ENCODE measurements at regions of chr1 and their contacts with region 1.

Region 1: DNA sequence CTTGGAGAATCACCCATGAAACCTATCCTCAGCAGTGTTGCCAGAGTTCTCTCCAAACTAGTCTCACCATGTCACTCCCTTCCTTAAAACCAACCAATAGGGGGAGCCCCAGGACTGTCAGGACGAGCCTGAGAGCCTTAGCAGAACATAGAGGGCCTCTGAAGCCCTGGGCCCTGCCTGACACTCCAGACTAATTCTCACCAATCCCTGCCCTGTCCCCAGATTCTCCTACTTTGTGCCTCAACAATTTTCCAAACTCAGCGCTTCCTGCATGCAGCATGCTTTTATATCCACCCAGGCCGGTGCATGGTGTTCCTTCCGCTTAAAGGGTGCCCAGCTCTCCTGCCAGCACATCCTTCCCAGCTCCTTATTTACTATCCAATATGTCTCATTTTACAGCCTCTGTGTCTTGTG is 42.7 kb downstream of the HSD3B1 start:
- DNase-seq: peak; percentile 40 to 76
- H3K4me3 ChIP-seq: no peak overlapping the region
- H3K4me1 ChIP-seq: no peaks in the 10 kb centered on the region
- H3K27me3 ChIP-seq: no peaks in the 10 kb centered on the region

Region 2: GRCh38 chr1:119384591-119384990 is 165.1 kb before region 1 on chr1:
- in situ Hi-C with region 1: no loop called
- DNase-seq: no peak
- H3K4me3 ChIP-seq: no peak overlapping the region
- H3K4me1 ChIP-seq: no peaks in the 10 kb centered on the region
- H3K27me3 ChIP-seq: peaks cover 9% of the 10 kb centered on the region; the same call in 1 of the 2 replicates

Region 3: GRCh38 chr1:119613769-119614720 is 64.3 kb after region 1 on chr1:
- in situ Hi-C with region 1: no loop called
- DNase-seq: peak; percentile 84 to 93
- H3K4me3 ChIP-seq: no peak overlapping the region
- H3K4me1 ChIP-seq: no peaks in the 10 kb centered on the region
- H3K27me3 ChIP-seq: no peaks in the 10 kb centered on the region

Region 4: DNA sequence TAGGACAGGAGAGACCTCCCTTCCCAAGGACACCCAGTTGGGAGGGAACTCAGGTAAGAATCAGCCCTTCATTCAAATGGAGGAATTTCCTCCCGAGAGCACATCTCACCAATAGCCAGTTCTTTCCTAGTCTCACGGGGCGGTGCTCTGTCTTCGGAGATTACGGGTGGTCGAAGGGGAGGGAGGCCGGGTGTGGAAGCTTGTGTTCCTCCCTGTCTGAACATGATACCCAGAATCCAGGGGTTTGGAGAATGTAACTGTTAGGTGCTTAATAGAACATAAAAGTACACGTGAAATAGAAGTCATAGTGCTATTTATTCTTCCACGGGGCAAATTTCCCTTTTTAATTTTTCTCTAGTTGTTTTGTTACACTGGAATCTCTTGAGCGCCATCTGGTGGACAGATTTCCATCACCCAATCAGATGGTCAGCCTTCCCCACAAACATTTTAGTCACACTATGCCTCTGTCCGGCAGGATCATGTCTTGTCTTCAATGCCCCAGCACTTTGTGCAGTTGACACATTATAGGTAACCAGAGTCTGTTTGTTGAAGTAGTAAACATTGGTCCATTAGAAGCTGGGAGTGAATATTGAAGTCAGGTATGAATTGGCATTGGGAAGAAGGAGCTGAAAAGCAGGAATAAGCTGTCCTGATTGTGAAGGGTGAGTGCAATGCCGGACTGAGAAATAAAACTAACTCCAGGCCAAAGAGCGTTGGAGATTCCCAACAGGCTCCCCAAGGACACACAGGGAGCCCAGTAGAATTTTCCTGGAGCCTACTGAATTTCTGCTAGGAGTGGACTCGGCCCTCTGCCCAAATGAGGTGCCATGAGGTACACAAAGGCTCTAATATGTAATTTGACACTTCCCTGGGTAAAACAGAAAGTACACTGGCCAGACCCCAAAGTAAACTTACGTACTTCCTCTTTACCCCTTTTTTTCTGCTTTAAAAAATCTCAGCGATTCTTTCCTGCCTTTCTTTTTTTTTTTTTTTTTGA is 125.9 kb after region 1 on chr1:
- in situ Hi-C with region 1: loop called (anchors 25 kb)
- DNase-seq: peak; percentile 76 to 91
- H3K4me3 ChIP-seq: peak overlapping the region; percentile 23
- H3K4me1 ChIP-seq: peaks cover 41% of the 10 kb centered on the region
- H3K27me3 ChIP-seq: no peaks in the 10 kb centered on the region

Region 5: DNA sequence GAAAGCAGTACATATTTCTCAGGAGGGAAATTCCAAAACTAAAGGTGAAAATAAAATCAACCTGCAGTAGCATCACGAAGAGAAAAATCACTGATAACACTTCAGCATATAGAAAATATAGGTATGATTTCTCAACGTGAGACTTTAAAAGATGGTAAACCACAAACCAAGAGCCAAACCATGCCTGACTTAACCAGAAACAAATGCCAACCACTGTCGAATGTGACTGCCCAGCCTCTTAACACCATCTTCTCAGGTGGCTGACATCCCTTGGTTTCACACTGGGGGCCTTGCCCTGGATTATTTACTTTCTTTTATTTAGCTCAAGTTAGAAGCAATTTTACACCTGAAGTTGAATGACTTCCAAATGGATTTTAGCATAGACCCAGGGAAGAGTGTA is 208.9 kb after region 1 on chr1:
- in situ Hi-C with region 1: no loop called
- DNase-seq: no peak
- H3K4me3 ChIP-seq: no peak overlapping the region
- H3K4me1 ChIP-seq: no peaks in the 10 kb centered on the region
- H3K27me3 ChIP-seq: no peaks in the 10 kb centered on the region; the same call in 1 of the 2 replicates

Region 6: DNA sequence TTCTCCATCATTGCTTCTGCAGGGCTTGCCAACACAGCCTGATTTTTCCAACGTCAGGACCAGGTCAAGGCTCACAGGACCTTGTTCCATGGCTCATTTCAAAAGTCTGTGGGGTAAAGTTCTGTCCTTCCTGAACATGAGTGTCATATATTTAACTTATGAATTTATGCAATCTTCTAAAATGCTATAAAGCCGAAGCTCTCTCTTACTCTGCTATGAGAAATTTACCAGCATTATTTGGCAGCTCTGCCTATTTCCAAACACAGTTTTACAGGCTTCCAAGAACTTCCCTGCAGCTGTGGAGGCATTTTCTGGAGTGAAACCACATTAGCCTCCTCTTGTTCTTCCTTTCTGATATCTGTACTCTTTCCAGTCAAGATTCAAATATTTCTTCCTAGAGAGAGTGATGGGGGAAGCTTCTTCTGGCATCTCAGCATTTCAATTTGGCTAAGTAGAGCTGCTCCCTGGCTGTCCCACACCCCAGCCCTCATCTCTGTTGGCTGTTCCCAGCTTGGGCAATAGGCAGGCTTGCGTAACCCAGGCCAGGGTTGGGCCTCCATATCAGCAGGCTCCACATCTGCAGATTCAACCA is 234.6 kb after region 1 on chr1:
- in situ Hi-C with region 1: no loop called
- DNase-seq: no peak
- H3K4me3 ChIP-seq: no peak overlapping the region
- H3K4me1 ChIP-seq: no peaks in the 10 kb centered on the region
- H3K27me3 ChIP-seq: no peaks in the 10 kb centered on the region